ENCODE measurements at regions of chr3 and their contacts with region 1.

Region 1: DNA sequence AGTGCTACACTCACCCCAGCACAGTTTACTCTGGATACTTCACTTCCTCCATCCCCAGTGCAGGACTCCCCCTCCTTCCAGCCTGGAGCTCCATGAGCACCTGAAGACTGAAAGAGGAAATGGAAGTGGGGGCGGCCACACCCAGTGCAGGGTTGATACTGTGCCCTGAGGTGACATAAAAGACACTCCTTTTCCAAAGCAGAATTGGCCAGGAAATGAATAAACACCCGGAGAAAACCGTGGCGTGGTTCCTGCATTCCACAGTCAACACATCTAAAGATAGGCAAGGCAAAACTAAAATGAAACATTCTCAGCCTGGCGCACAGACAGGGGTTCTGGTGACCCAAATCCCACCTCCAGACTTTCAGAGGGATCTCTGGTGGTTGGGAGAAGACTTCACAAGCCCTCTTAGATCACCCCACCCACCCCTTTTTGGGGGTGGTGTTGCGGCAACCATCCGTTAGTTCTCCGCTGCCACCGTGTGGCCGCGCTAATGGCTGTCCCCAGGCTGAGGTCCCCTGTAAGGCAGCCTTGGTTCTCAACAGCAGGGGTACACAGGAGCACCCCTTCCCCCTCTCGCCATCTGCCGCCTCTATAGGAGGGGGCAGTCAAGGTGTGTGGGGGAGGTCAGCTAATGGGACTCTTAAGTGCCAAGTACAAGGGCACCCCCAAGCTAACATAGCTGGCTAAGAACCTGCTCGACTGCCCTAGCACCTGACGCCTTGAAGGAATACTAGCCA is 2.5 kb upstream of the MST1R start:
- DNase-seq: peak; percentile 74
- ATAC-seq: peak; percentile 57

Region 2: GRCh38 chr3:49786241-49786958 is 119.8 kb before region 1 on chr3 and contains the start of gene IP6K1:
- intact Hi-C with region 1: no loop called
- DNase-seq: peak; percentile 100
- ATAC-seq: peak; percentile 100
- total RNA-seq, gene IP6K1: 19.0 TPM

Region 3: GRCh38 chr3:49839193-49839809 is 66.9 kb before region 1 on chr3:
- intact Hi-C with region 1: loop called (anchors 2 kb)
- DNase-seq: peak; percentile 89
- ATAC-seq: peak; percentile 85